Lower leg skin (tissue), 4 donors: ENCODE measurements at regions of chr19 and their contacts with region 1.

Region 1: DNA sequence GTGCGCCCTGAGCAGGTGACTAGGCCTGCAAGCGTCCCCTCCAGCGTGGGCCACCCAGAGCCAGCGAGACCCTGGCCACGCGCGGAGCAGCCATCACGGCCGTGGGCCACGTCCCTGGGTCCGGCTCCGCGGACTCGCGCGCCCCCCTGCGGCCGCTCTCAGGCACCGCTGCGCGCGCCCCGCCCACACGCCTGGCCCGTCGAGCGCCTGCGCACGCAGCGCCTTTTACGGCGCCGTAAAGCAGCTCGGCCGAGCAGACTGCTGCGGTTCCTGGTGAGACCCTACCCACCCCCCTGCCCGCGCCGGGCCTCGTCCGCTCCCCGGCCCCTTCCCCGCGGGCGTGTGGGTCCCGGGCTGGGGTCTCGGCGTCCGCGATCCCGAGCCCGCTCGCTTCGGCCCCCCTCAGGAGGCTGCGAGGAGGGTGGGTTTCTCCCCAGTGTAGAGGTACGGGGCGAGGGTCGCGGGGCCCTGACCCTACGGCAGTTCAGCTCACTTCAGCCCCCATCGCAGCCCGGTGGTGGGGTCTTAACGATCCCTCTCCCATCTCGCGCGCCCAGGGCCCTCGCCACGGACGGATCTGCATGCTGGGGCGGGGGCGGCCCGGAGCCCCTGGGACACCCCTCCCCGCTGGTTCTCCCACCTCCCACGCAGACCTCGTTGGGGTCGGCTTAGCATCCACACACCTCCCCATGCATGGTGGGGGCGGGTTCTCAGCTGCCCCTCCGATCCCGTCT is at the start of gene TRAPPC5:
- DNase-seq: peak; percentile 67 to 96
- H3K4me3 ChIP-seq: peak within 1 kb of the TSS; percentile 95
- CTCF ChIP-seq: no peak
- POLR2A ChIP-seq: no peak
- total RNA-seq, gene TRAPPC5: 115 to 197 (median 143) TPM

Region 2: DNA sequence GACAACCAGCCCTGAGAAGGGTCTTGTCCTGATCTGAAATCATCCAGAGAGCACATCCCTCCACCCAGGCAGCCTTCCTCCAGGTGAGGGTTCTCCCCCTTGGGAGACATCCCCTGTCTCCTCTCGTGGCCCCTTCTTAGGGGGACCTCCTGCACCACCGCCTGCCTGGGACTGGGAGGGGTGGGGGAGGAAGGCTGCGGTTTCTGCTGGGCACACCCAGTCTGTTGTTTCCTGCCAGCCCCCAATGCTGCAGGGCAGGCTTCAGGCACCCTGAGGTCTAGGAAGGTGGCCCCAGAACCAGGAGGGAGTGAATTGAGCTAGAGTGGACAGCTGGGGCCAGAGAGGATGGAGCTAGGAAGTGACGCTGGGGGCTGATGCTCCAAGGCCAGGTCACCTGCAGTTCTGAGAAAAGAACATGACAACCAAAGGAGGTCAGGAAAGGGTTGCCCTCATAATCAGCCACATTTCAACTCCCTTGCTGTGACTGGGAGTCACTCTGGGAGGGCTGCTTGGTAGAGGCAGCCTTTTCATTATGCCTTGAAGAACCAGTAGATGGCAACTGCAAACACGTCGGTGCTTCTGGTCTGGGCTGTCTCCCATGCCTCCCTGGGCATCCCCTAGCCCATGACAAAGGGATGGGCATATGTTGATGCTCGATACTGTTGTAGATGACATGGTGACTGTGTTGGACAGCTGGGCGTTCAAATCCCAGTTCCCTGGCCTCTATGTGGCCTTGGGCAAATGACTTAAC is 330.6 kb before region 1 on chr19:
- intact Hi-C with region 1: loop called (anchors 10 kb)
- DNase-seq: no peak
- H3K4me3 ChIP-seq: no peak overlapping the region
- CTCF ChIP-seq: no peak
- POLR2A ChIP-seq: no peak

Region 3: GRCh38 chr19:7562646-7563393 is 118.0 kb before region 1 on chr19:
- intact Hi-C with region 1: loop called (anchors 2 kb)
- DNase-seq: no peak
- H3K4me3 ChIP-seq: no peak overlapping the region
- CTCF ChIP-seq: no peak
- POLR2A ChIP-seq: no peak

Region 4: GRCh38 chr19:7641288-7642276 is 39.2 kb before region 1 on chr19:
- intact Hi-C with region 1: no loop called
- DNase-seq: no peak
- H3K4me3 ChIP-seq: no peak overlapping the region
- CTCF ChIP-seq: no peak
- POLR2A ChIP-seq: no peak

Region 5: DNA sequence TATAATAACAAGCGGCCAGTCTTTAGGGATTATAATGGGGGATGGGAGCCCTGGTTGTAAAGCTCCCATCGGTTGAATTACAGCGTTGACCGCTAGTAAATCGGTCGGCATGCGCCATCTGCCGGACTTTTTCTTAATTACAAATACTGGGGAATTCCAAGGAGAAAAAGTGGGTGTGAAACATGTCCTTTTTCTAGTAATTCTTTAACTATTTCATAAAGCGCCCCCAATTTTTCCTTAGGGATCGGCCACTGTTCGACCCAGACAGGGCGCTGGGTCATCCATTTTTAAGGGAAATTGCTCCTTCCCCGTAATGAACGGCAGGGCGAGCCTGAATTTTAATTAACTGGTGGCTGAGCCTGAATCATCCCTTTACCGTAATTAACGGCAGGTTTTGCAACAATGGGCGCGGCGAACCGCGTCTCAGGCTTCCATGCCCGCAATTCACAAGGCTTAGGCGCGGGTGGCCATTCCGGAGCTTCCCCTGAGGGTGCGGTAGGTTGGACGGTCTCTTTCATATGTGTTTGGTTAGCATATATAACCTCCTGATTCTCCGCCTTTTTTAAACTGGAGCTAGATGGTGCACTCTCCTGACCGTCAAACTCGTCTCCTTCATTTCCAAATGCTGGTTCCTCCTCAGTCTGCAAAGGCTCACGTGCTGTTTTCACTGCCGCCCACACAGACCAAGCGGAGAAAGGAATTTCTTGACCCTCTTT is 119.0 kb after region 1 on chr19:
- intact Hi-C with region 1: no loop called
- DNase-seq: peak; percentile 64 to 92
- H3K4me3 ChIP-seq: no peak overlapping the region
- CTCF ChIP-seq: no peak
- POLR2A ChIP-seq: no peak